IMR-90 (cell line): ENCODE measurements at regions of chr17 and their contacts with region 1.

Region 1: DNA sequence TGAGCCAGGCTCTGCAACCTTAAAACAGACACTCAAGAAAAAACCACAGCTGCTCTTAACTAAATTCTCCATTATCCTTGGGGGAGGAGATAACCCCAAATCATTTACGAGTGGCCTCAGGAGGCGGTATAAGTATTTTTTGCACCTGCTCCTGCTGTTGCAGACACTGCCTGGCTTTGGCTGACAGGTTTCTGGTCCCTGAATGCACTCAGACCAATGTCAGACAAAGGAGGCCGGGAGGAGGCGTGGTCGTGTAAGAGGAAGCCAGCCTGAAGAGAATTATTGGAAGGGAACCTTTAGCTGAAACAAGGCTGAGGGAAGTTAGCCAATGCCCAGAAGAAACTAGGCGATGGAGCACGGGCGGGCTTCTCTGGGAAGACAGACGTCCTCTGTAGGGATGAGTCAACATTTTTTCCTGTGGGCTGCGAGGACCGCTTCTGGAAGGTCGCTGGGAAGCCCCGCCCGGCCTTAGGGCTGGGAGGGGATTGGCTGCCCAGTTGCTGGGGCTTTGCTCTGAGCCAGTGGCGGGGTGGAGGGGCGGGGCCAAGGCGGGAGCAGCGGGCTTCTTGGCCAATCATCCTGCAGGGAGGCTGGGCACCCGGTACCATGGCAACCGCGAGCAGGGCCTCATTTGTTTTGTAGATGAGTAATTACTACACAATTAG is 82.3 kb downstream of the CCDC182 start:
- DNase-seq: peak; percentile 99
- ATAC-seq: peak; percentile 98
- H3K4me3 ChIP-seq: peak overlapping the region; percentile 1; the same call in 1 of the 2 replicates
- H3K27ac ChIP-seq: peak overlapping the region; percentile 38
- H3K4me1 ChIP-seq: peaks cover 17% of the 10 kb centered on the region
- H3K27me3 ChIP-seq: no peaks in the 10 kb centered on the region
- CTCF ChIP-seq: no peak
- POLR2A ChIP-seq: peak; percentile 48
- RAD21 ChIP-seq: peak; percentile 30; the same call in 1 of the 2 replicates

Region 2: DNA sequence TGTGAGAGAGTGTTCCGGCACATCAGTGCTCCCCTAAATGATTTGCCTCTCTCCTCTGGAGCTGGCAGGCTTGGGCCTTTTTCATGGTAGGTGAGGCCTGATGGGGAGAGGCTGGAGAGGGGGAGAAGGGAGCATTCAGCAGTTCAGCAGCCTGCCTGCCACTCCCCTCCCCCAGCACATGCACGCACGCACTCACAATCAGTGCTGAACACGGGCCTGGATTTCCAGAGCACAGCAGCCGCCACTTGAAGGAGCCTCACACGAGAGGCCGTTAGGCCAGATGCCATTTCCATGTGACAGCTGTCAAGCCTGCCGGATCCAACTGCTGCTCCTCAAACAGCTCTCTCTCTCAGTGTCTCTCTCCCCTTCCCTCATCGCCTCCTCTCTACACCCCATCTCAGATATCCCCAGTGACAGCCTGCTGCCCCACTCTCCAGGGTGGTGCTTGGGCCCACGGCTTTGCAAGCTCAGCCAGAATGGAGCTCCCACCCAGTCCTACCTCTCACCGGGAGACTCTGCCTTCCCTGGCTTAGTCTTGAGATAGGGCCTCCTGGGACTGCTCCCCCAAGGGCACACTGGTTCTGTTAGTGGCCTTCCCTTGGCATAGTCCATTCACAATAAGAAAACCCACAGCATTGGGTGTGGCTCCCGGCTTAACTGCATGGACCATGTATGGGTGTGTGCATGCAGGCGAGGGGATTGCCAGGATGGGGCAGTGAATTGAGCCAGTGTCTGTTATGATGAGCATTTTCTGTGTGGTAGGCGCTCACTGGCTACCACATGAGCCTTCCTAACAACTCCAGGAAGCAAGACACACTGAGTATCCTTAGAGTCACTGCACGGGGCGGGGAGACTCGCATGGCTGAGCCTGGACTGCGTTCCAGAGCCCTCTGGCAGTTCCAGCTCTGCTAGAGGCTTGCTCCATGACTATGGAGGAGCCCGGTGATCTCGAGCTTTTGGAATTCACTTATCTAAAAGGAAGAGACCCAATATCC is 143.9 kb before region 1 on chr17:
- CTCF ChIA-PET with region 1: no interaction called
- POLR2A ChIA-PET with region 1: no interaction called
- dilution Hi-C with region 1: no loop called
- in situ Hi-C with region 1: no loop called
- intact Hi-C with region 1: loop called (anchors 2 kb)
- DNase-seq: peak; percentile 58
- ATAC-seq: peak; percentile 28; the same call in 1 of the 2 replicates
- H3K4me3 ChIP-seq: no peak overlapping the region
- H3K27ac ChIP-seq: no peak overlapping the region
- H3K4me1 ChIP-seq: peaks cover 21% of the 10 kb centered on the region
- H3K27me3 ChIP-seq: no peaks in the 10 kb centered on the region
- CTCF ChIP-seq: no peak
- POLR2A ChIP-seq: no peak
- RAD21 ChIP-seq: no peak

Region 3: GRCh38 chr17:57622683-57623433 is 39.9 kb before region 1 on chr17:
- CTCF ChIA-PET with region 1: no interaction called
- POLR2A ChIA-PET with region 1: no interaction called
- dilution Hi-C with region 1: no loop called
- in situ Hi-C with region 1: no loop called
- intact Hi-C with region 1: loop called (anchors 5 kb)
- DNase-seq: peak; percentile 85
- ATAC-seq: peak; percentile 91
- H3K4me3 ChIP-seq: no peak overlapping the region
- H3K27ac ChIP-seq: peak overlapping the region; percentile 2; the same call in 1 of the 2 replicates
- H3K4me1 ChIP-seq: peaks cover 18% of the 10 kb centered on the region
- H3K27me3 ChIP-seq: no peaks in the 10 kb centered on the region
- CTCF ChIP-seq: no peak
- POLR2A ChIP-seq: no peak
- RAD21 ChIP-seq: no peak